ENCODE measurements at regions of chr1 and their contacts with region 1.

Region 1: GRCh38 chr1:205791568-205792180 is 16.4 kb upstream of the RAB29 start:
- DNase-seq: peak; percentile 56 to 75
- H3K4me3 ChIP-seq: no peak overlapping the region
- H3K4me3 Mint-ChIP-seq: no peak overlapping the region
- H3K27ac Mint-ChIP-seq: no peak overlapping the region
- H3K4me1 ChIP-seq: no peaks in the 10 kb centered on the region
- H3K4me1 Mint-ChIP-seq: no peaks in the 10 kb centered on the region
- H3K27me3 ChIP-seq: no peaks in the 10 kb centered on the region
- H3K27me3 Mint-ChIP-seq: no peaks in the 10 kb centered on the region
- CTCF ChIP-seq: peak; percentile 90

Region 2: GRCh38 chr1:205750138-205751035 is 41.3 kb before region 1 on chr1 and contains the start of gene NUCKS1:
- CTCF ChIA-PET with region 1: no interaction called
- POLR2A ChIA-PET with region 1: no interaction called
- intact Hi-C with region 1: no loop called
- DNase-seq: peak; percentile 97 to 99
- H3K4me3 ChIP-seq: peak within 1 kb of the TSS; percentile 93
- H3K4me3 Mint-ChIP-seq: peak within 1 kb of the TSS; percentile 87
- H3K27ac Mint-ChIP-seq: peak within 1 kb of the TSS; percentile 99
- H3K4me1 ChIP-seq: 0 out of 2 replicates have a peak, but pooled peaks cover 3% of the 10 kb centered on the region
- H3K4me1 Mint-ChIP-seq: peaks cover 7% of the 10 kb centered on the region
- H3K27me3 ChIP-seq: no peaks in the 10 kb centered on the region
- H3K27me3 Mint-ChIP-seq: no peaks in the 10 kb centered on the region
- CTCF ChIP-seq: peak in 1 of 2 experiments; percentile 18
- total RNA-seq, gene NUCKS1: 205 and 215 TPM in 2 replicates

Region 3: GRCh38 chr1:205878026-205878425 is 86.4 kb after region 1 on chr1:
- CTCF ChIA-PET with region 1: no interaction called
- POLR2A ChIA-PET with region 1: no interaction called
- intact Hi-C with region 1: no loop called
- DNase-seq: no peak
- H3K4me3 ChIP-seq: no peak overlapping the region
- H3K4me3 Mint-ChIP-seq: no peak overlapping the region
- H3K27ac Mint-ChIP-seq: no peak overlapping the region
- H3K4me1 ChIP-seq: no peaks in the 10 kb centered on the region
- H3K4me1 Mint-ChIP-seq: no peaks in the 10 kb centered on the region
- H3K27me3 ChIP-seq: no peaks in the 10 kb centered on the region
- H3K27me3 Mint-ChIP-seq: peaks cover 5% of the 10 kb centered on the region
- CTCF ChIP-seq: no peak

Region 4: GRCh38 chr1:205907794-205908193 is 116.1 kb after region 1 on chr1:
- CTCF ChIA-PET with region 1: interaction called, 5 read pairs
- POLR2A ChIA-PET with region 1: no interaction called
- intact Hi-C with region 1: loop called (anchors 1 kb)
- DNase-seq: peak in 1 of 2 experiments; percentile 25
- H3K4me3 ChIP-seq: no peak overlapping the region
- H3K4me3 Mint-ChIP-seq: no peak overlapping the region
- H3K27ac Mint-ChIP-seq: no peak overlapping the region
- H3K4me1 ChIP-seq: peaks cover 6% of the 10 kb centered on the region
- H3K4me1 Mint-ChIP-seq: peaks cover 6% of the 10 kb centered on the region
- H3K27me3 ChIP-seq: no peaks in the 10 kb centered on the region
- H3K27me3 Mint-ChIP-seq: no peaks in the 10 kb centered on the region
- CTCF ChIP-seq: peak; percentile 59 to 77

Region 5: DNA sequence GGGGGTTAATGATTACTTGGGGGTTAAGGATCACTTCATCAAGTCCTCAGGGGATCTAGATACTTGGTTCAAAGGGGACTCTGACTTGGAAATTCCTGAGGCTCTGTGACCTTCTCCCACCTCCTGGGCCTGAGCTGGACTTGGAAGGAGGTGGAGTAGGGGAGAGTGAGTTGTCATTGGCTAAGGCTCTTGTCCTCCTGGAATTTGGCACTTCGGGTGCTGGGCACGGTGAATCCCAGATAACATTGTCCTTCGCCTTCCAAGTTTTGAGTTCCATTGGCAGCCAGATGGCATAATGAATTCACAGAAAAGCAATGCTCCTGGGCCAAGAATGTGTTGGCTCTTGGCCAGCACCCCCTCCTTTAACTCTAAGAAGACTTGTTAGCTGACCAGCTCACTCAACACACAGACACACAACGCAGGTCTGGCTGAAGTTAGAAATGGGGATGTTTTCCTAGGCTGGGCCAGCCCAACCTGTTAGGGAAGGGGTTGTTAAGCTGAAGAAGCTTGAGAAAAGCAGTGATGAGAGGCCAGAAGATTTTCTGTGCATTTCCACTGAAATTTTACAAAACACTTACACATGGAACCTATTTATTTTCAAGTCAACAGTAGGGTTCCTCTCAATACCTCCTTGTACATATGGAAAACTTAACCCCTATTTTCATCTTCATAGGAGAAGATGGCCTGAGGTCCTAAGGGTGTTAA is 121.9 kb after region 1 on chr1:
- CTCF ChIA-PET with region 1: interaction called, 5 read pairs
- POLR2A ChIA-PET with region 1: no interaction called
- intact Hi-C with region 1: loop called (anchors 1 kb)
- DNase-seq: peak; percentile 43 to 71
- H3K4me3 ChIP-seq: no peak overlapping the region
- H3K4me3 Mint-ChIP-seq: no peak overlapping the region
- H3K27ac Mint-ChIP-seq: no peak overlapping the region
- H3K4me1 ChIP-seq: peaks cover 24% of the 10 kb centered on the region
- H3K4me1 Mint-ChIP-seq: peaks cover 6% of the 10 kb centered on the region
- H3K27me3 ChIP-seq: no peaks in the 10 kb centered on the region
- H3K27me3 Mint-ChIP-seq: no peaks in the 10 kb centered on the region
- CTCF ChIP-seq: no peak